Gastrocnemius medialis (tissue), 4 donors: ENCODE measurements at regions of chr3 and their contacts with region 1.

Region 1: DNA sequence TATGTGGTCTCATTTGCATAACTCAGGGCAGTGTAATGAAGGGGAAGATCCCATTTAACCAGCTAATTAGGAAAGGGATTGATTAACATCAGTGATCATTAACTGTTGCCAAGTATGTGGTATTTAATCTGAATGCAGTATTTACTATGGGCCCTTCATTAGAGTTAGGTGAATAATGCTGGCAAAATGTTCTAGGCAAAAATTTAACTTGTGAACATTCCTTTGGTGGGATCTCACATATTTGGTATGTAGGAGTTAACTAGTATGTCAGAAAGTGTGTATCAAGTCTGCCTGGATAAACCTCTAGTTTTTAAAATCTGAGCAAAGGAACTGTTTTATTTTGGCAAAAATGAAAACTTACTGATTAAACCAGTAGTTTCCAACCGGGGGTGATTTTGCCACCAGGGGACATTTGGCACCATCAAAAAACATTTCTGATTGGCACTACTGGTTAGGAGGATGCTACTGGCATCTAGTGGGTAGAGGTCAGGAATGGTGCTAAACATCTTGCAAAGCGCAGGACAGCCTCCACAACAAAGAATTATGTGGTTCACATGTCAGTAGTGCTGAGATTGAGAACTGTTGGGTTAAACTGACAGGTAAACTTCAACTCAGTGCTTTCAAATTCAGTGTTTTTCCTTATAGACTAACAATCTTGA is 22.5 kb downstream of the LRTM1 start:
- DNase-seq: no peak
- ATAC-seq: no peak
- H3K4me3 ChIP-seq: no peak overlapping the region
- H3K27ac ChIP-seq: peak overlapping the region in 2 of 4 donors; percentile 78 to 85
- H3K4me1 ChIP-seq: peaks cover 57 to 59% of the 10 kb centered on the region in 2 donors
- H3K27me3 ChIP-seq: no peaks in the 10 kb centered on the region
- CTCF ChIP-seq: peak in 1 of 5 experiments; percentile 18
- POLR2A ChIP-seq: no peak

Region 2: GRCh38 chr3:54891548-54892120 is 13.7 kb before region 1 on chr3:
- in situ Hi-C with region 1: no loop called
- intact Hi-C with region 1: loop called (anchors 1 kb)
- DNase-seq: peak; percentile 91 to 94
- ATAC-seq: peak; percentile 96 to 98
- H3K4me3 ChIP-seq: no peak overlapping the region
- H3K27ac ChIP-seq: peak overlapping the region; percentile 78 to 93 (median 84)
- H3K4me1 ChIP-seq: peaks cover 33 to 49% of the 10 kb centered on the region in 2 donors
- H3K27me3 ChIP-seq: no peaks in the 10 kb centered on the region
- CTCF ChIP-seq: peak; percentile 48 to 69 (median 60)
- POLR2A ChIP-seq: no peak

Region 3: GRCh38 chr3:54939557-54940300 is 34.4 kb after region 1 on chr3:
- in situ Hi-C with region 1: no loop called
- intact Hi-C with region 1: loop called (anchors 5 kb)
- DNase-seq: no peak
- ATAC-seq: no peak
- H3K4me3 ChIP-seq: no peak overlapping the region
- H3K27ac ChIP-seq: no peak overlapping the region
- H3K4me1 ChIP-seq: peaks cover 5 to 19% of the 10 kb centered on the region in 2 donors
- H3K27me3 ChIP-seq: no peaks in the 10 kb centered on the region
- CTCF ChIP-seq: no peak
- POLR2A ChIP-seq: no peak

Region 4: DNA sequence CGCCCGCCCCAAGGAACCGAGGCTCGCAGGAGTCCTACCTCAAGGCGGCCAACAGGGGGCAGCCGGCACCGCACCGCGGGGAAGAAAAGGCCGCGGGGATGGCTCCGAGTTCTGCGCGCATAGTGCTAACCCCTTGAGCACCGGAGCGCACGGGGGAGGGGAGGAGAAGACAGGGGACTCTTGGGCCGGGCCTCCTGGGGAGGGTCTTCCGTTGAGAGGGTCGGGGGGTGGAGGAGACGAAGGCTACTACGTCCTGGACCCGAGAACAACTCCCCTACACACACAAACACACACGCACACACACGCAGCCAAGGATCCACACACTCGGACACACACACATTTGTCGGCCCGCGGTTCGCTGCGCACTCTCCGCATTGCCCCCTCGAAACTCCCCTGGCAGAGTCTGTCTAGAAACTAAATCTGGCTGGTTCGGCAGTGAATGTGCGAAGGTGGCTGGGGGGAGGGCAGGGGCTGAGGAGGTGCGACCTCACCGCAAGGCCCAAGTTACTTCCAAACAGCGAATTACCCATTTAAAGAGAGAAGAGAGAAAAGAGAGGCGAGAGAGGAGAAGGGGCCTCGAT is 579.9 kb after region 1 on chr3:
- in situ Hi-C with region 1: no loop called
- intact Hi-C with region 1: no loop called
- DNase-seq: peak; percentile 65 to 66
- ATAC-seq: peak; percentile 53 to 69
- H3K4me3 ChIP-seq: peak overlapping the region; percentile 57 to 82 (median 68)
- H3K27ac ChIP-seq: peak overlapping the region; percentile 61 to 82 (median 77)
- H3K4me1 ChIP-seq: peaks cover 0 to 41% of the 10 kb centered on the region in 2 donors
- H3K27me3 ChIP-seq: peaks cover 4 to 13% (median 6%) of the 10 kb centered on the region in 3 donors
- CTCF ChIP-seq: peak in 4 of 5 experiments; percentile 19 to 93 (median 71)
- POLR2A ChIP-seq: no peak